Panc1 (cell line): ENCODE measurements at regions of chr7 and their contacts with region 1.

Region 1: DNA sequence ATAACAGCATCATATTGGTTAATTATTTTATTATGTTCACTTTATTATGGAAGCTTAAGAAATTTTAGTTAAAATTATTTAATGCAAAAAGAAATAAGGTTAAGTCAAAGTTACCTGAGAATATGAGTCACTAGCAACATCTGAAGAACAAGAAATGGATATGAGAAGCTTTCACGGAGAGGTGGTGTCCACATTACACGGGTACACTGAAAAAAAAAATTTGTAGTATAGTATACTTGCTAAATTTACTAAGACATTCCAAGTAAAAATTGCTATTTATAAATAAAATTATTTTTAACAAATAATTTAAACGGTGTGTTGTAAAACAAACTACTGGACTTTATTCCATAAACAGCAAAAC is 63.9 kb downstream of the DPY19L1 start:
- DNase-seq: no peak
- ATAC-seq: no peak
- H3K4me3 ChIP-seq: no peak overlapping the region
- H3K27ac ChIP-seq: no peak overlapping the region
- H3K4me1 ChIP-seq: no peaks in the 10 kb centered on the region
- H3K27me3 ChIP-seq: no peaks in the 10 kb centered on the region
- CTCF ChIP-seq: no peak

Region 2: GRCh38 chr7:34991938-34992840 is 18.8 kb after region 1 on chr7:
- CTCF ChIA-PET with region 1: no interaction called
- POLR2A ChIA-PET with region 1: no interaction called
- in situ Hi-C with region 1: no loop called
- intact Hi-C with region 1: no loop called
- DNase-seq: no peak
- ATAC-seq: peak; percentile 75; the same call in 1 of the 2 replicates
- H3K4me3 ChIP-seq: no peak overlapping the region
- H3K27ac ChIP-seq: no peak overlapping the region
- H3K4me1 ChIP-seq: no peaks in the 10 kb centered on the region
- H3K27me3 ChIP-seq: no peaks in the 10 kb centered on the region
- CTCF ChIP-seq: no peak

Region 3: DNA sequence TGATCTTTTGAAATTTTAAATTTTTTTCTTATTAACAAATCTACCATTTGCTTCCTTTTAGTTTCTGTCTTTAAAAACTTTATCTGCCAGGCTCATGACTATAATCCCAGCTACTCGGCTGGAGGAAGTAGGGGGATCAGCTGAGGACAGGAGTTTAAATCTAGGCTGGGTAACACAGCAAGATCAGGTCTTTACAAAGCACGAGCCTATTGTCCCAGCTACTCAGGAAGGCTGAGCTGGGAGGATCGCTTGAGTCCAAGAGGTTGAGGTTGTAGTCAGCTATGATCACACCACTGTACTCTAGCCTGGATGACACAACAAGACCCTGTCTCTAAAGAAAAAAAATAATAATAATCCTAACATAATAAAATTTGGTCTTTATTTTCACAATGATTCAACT is 46.4 kb after region 1 on chr7:
- CTCF ChIA-PET with region 1: no interaction called
- POLR2A ChIA-PET with region 1: interaction called, 14 read pairs
- in situ Hi-C with region 1: no loop called
- intact Hi-C with region 1: no loop called
- DNase-seq: no peak
- ATAC-seq: peak; percentile 67
- H3K4me3 ChIP-seq: no peak overlapping the region
- H3K27ac ChIP-seq: peak overlapping the region; percentile 45
- H3K4me1 ChIP-seq: peaks cover 32% of the 10 kb centered on the region
- H3K27me3 ChIP-seq: no peaks in the 10 kb centered on the region
- CTCF ChIP-seq: no peak